ENCODE measurements at regions of chr1 and their contacts with region 1.

Region 1: DNA sequence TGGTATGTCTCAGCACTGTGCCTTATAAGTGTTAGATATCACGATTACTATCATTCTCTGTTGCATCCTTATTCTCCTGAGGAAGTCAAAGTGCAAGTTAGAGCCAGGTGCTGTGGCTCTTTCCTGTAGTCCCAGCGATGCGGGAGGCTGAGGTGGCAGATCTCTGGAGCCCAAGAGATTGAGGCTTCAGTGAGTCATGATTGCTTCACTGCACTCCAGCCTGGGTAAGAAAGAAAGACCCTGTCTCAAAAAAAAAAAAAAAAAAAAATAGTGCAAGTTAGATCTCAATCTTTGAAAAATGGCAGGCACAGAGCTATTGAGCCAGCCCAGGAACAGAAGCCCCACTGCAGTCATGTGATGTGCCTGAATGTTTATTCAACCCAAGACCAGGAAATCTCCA is 147.8 kb upstream of the POGK start:
- DNase-seq: no peak
- H3K27ac ChIP-seq: no peak overlapping the region
- CTCF ChIP-seq: no peak

Region 2: DNA sequence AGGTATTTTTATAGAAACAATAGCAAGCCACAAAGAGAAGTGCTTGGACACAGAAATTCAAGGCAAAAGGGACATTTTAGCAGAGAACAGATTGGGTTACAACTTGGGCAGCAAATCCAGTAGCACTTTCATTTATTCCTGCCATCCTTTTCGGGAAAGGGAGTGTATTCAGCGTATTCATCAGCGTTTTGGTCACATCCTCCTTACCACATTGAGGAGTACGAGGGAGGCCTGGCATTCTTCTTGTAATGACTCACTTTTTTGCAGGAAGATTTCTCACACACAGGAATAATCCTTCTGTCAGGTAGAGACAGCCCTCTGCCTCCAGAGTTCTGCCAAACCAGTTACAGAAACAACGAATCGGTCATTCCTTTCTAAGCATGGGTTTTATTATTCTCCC is 506.6 kb before region 1 on chr1:
- CTCF ChIA-PET with region 1: no interaction called
- POLR2A ChIA-PET with region 1: no interaction called
- DNase-seq: peak; percentile 65
- H3K27ac ChIP-seq: no peak overlapping the region
- CTCF ChIP-seq: no peak

Region 3: DNA sequence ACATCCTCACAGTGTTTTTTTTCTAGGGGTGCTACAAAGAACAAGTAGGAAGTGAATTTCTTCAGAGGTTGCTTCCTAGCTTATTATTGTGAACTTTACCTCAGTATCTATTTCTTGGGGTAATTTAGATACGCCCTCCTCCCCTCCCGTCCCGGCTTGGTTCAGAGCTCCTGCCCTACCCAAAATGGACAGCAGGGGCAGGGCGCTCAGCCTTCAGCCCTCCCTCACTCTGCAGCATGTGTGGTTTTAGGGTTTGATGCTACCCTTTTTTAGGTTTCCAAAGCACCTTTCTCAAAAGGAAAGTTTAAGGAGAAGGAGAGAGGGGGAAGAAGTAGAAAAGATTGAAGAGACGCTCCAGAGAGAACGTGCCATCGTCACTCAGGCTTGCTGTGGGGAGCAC is 130.9 kb after region 1 on chr1:
- CTCF ChIA-PET with region 1: no interaction called
- POLR2A ChIA-PET with region 1: interaction called, 13 read pairs
- DNase-seq: no peak
- H3K27ac ChIP-seq: no peak overlapping the region
- CTCF ChIP-seq: 0 out of 2 replicates have a peak, but pooled peaks have one; percentile 10

Measured in RWPE1 (cell line).